ENCODE measurements at regions of chr14 and their contacts with region 1.

Region 1: DNA sequence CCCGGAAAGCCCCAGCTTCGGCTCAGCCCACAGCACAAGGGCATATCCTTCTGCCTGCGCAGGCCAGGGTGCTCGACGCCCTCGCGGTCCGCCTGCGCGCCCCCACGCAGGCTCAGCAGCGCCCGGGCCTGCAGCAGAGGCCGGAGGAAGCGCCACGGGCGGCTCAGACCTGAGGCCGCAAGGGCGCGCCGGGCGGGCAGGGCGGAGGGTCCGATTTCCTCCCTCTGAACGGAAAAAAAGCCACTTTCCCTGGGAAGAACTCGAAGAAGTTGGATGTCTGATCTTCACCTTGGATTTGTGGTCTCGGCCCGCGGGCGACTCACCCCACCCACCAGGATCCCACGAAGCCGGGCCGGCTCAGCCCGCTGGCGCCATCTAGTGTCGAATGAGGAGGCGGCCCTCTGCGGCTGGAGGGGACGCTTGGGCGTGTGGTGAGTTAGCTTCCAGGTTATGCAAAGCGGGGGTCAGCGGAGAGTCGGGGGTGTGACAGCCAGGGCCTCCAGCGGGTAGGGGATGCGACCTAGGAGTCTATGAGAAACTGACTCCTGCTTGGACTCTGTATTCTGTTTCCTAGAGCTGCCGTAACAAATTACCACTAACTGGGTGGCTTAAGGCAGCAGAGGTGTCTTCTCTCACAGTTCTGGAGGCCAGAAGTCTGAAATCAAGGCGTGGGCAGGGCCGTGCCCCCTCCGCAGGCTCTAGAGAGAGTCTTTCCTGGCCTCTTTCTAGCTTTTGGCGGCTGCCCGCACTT is 40.0 kb upstream of the SRSF5 start:
- H3K4me3 Mint-ChIP-seq: peak overlapping the region; percentile 65
- H3K27ac Mint-ChIP-seq: peak overlapping the region; percentile 70
- H3K4me1 Mint-ChIP-seq: peaks cover 47% of the 10 kb centered on the region
- H3K27me3 Mint-ChIP-seq: peaks cover 2% of the 10 kb centered on the region

Region 2: DNA sequence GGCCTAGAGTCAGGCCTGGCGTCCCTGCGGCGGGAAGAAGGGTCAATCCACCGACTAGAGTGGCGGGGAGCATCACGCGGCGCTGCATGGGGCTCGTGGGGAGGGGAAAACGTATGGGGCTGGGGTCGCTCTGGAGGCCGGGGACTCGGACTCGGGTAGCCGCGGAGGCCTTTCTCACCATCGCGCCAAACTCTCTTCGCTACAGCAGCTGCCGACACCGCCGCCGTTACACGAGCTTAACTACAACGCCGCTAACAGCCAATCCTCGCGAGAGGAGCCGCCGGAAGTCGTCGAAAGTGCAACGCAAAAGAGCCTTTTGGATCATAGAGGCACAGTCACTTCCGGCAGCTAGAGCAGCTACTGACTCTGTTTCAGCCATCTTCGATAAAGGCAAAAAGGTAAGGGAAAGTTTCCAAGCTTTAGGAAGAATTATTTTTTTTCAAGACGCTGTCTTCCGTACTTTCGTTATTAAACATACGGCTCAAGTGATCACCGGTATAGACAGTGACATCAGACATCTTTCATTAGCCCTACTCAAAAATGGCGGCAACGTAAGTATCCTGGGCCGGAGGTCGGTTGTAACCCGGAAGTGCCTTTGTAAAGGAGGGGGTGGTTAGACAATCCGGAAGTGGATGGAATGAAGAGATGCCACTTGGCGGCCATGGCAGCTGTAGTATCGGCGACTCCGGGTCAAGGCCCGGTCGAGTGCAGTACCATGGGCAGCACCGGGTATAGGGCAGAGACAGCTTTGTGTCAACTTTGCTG is 328.7 kb before region 1 on chr14 and contains the starts of genes ERH and SLC39A9:
- intact Hi-C with region 1: no loop called
- H3K4me3 Mint-ChIP-seq: peak within 1 kb of the TSS; percentile 89
- H3K27ac Mint-ChIP-seq: peak within 1 kb of the TSS; percentile 95
- H3K4me1 Mint-ChIP-seq: peaks cover 29% of the 10 kb centered on the region
- H3K27me3 Mint-ChIP-seq: no peaks in the 10 kb centered on the region

Region 3: GRCh38 chr14:69580009-69580577 is 146.8 kb before region 1 on chr14:
- intact Hi-C with region 1: loop called (anchors 1 kb)
- H3K4me3 Mint-ChIP-seq: no peak overlapping the region
- H3K27ac Mint-ChIP-seq: no peak overlapping the region
- H3K4me1 Mint-ChIP-seq: peaks cover 12% of the 10 kb centered on the region
- H3K27me3 Mint-ChIP-seq: peaks cover 41% of the 10 kb centered on the region

Region 4: DNA sequence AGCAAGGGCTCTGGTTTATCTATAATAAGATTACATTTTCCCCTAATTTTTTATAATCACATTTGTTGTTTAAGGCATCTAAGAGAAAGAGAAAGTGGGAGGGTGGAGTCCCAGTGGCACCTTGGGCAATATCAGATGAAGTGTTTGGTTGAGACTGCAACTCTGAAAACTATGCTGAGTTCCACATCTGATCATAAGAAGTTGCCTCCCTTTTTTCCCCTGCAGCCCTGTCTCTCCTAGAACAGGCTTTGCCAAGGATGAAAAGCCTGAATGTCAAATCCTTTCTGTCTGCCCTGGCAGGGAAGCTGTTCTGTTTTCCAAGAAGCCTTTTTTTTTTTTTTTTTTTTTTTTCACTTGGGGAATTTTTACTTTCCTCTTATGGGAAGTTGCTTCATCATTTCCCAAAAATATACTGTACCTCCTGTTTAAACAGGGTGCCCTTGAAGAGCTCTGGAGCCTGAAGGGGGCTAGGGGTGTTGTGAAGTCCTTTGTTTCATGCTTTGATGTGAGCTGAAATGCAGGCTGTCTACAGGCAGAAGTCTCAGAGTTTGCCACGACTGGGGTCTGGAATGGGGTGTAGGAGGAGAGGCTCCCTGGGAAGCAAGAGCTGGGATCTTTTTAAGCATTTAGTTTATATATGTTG is 44.2 kb before region 1 on chr14:
- intact Hi-C with region 1: loop called (anchors 5 kb)
- H3K4me3 Mint-ChIP-seq: no peak overlapping the region
- H3K27ac Mint-ChIP-seq: peak overlapping the region; percentile 40
- H3K4me1 Mint-ChIP-seq: peaks cover 65% of the 10 kb centered on the region
- H3K27me3 Mint-ChIP-seq: no peaks in the 10 kb centered on the region

Region 5: DNA sequence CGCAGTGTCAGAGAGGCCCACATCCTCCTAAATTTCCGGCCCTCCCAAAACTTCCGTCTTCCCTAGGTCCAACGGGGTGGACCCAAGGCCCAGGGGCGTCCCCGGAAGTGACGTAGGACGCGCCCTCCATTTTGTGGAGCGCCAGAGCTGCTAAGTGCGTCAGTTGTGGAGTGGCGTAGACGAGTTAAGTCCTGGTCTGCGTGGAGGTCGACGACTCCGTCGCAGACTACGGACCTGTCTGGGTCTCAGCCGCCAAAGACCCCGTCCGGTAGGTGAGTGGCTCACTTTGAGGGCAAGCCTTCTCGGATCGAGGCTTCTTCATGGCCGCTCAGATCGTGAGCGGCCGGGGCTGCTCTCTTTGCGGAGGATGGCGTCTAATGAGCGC is 40.0 kb after region 1 on chr14 and contains the start of gene SRSF5:
- intact Hi-C with region 1: loop called (anchors 5 kb)
- H3K4me3 Mint-ChIP-seq: peak within 1 kb of the TSS; percentile 89
- H3K27ac Mint-ChIP-seq: peak within 1 kb of the TSS; percentile 100
- H3K4me1 Mint-ChIP-seq: peaks cover 53% of the 10 kb centered on the region
- H3K27me3 Mint-ChIP-seq: no peaks in the 10 kb centered on the region

Measured in dendritic cell treated with granulocyte-macrophage colony-stimulating factor and Interleukin-4, amounts not matched to agents 40 ng/mL and 50 ng/mL, for 4 days (primary cell).